ENCODE measurements at regions of chr9 and their contacts with region 1.

Region 1: GRCh38 chr9:71806901-71807307 is 38.6 kb upstream of the CEMIP2 start:
- DNase-seq: peak; percentile 59
- ATAC-seq: peak; percentile 99

Region 2: GRCh38 chr9:71249729-71250317 is 557.1 kb before region 1 on chr9:
- intact Hi-C with region 1: no loop called
- DNase-seq: no peak
- ATAC-seq: peak; percentile 53

Region 3: DNA sequence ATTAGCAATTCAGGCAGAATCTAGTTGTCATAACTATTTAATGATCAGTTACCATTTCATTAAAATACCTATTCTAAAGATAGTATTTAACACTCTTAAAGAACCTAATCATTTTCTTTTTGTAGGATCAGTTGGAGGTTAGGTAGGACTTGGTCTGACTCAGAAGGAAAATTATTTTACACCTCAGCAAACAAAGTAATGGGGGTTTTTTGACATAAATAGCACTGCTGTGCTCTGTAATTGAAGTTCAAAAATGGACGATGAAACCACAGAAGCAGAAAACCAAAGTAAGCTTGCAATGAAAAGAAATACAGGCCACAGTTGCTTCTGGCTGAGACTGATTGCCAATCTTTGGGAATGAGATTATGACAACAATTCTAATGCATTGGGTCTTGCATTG is 498.4 kb before region 1 on chr9:
- intact Hi-C with region 1: no loop called
- DNase-seq: no peak
- ATAC-seq: no peak

Region 4: DNA sequence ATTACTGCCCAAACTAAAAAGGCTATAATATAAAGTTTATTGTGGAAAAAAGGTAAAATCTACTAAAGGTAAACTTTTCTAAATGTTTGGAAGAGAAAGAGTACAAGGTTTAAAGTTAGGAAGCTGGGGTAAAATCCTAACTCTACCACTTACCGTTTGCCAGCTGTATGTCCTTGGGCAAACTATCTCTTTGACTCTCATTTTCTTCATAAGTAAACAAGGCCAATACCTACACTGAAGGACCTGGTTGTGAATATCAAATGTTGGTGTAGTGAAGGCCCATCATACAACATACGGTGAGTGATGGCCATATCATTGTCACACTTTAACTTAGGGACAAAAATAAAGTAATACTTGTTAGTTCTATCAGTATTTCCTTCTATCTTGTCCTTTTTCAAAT is 69.2 kb after region 1 on chr9:
- intact Hi-C with region 1: no loop called
- DNase-seq: no peak
- ATAC-seq: no peak

Region 5: GRCh38 chr9:72022841-72023240 is 215.9 kb after region 1 on chr9:
- intact Hi-C with region 1: loop called (anchors 2 kb)
- DNase-seq: no peak
- ATAC-seq: no peak